ENCODE measurements at regions of chr10 and their contacts with region 1.

Region 1: GRCh38 chr10:11017570-11018431 is at the start of gene CELF2:
- DNase-seq: peak in 1 of 2 donors; percentile 79
- H3K4me3 ChIP-seq: peak within 1 kb of the TSS; percentile 77 to 78
- H3K27ac ChIP-seq: peak within 1 kb of the TSS; percentile 83 to 87
- H3K4me1 ChIP-seq: peaks cover 0 to 7% of the 10 kb centered on the region in 2 donors
- H3K27me3 ChIP-seq: no peaks in the 10 kb centered on the region
- CTCF ChIP-seq: no peak
- total RNA-seq, gene CELF2: 26.6 TPM

Region 2: GRCh38 chr10:10605551-10606081 is 412.2 kb before region 1 on chr10:
- intact Hi-C with region 1: loop called (anchors 5 kb)
- DNase-seq: peak in 1 of 2 donors; percentile 81
- H3K4me3 ChIP-seq: no peak overlapping the region
- H3K27ac ChIP-seq: peak overlapping the region; percentile 74 to 80
- H3K4me1 ChIP-seq: no peaks in the 10 kb centered on the region
- H3K27me3 ChIP-seq: no peaks in the 10 kb centered on the region
- CTCF ChIP-seq: no peak

Region 3: GRCh38 chr10:10831085-10831484 is 186.7 kb before region 1 on chr10:
- intact Hi-C with region 1: loop called (anchors 2 kb)
- DNase-seq: peak; percentile 53 to 94
- H3K4me3 ChIP-seq: peak overlapping the region in 1 of 2 donors; percentile 32
- H3K27ac ChIP-seq: peak overlapping the region; percentile 84 to 86
- H3K4me1 ChIP-seq: peaks cover 0 to 17% of the 10 kb centered on the region in 2 donors
- H3K27me3 ChIP-seq: no peaks in the 10 kb centered on the region
- CTCF ChIP-seq: no peak

Region 4: DNA sequence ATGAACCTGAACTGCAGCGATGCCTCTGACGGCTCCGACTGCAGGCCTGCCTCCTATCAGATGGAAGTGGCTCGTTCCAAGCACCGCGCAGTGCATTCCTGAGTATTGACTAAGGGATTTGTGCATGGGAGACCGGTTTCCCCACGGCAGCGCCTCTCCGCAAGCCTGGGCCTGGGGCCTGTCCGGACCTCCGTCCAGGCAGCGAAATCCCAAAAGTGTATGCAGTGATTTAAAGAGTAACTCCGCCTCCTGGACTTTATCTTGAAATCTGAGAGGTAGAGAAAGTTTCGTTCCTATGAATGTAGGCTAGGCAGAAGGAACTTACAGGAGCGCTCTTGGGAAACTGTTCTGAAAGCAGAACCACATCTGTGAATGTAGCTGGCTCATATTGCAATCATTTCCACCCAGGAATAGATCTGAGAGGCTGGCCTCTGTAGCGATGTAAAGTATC is 106.3 kb before region 1 on chr10:
- intact Hi-C with region 1: loop called (anchors 5 kb)
- DNase-seq: peak; percentile 19 to 91
- H3K4me3 ChIP-seq: peak overlapping the region; percentile 33 to 59
- H3K27ac ChIP-seq: peak overlapping the region; percentile 75 to 79
- H3K4me1 ChIP-seq: peaks cover 0 to 19% of the 10 kb centered on the region in 2 donors
- H3K27me3 ChIP-seq: no peaks in the 10 kb centered on the region
- CTCF ChIP-seq: no peak

Region 5: GRCh38 chr10:11097686-11098085 is 79.9 kb after region 1 on chr10:
- intact Hi-C with region 1: no loop called
- DNase-seq: no peak
- H3K4me3 ChIP-seq: no peak overlapping the region
- H3K27ac ChIP-seq: no peak overlapping the region
- H3K4me1 ChIP-seq: no peaks in the 10 kb centered on the region
- H3K27me3 ChIP-seq: no peaks in the 10 kb centered on the region
- CTCF ChIP-seq: no peak

Region 6: DNA sequence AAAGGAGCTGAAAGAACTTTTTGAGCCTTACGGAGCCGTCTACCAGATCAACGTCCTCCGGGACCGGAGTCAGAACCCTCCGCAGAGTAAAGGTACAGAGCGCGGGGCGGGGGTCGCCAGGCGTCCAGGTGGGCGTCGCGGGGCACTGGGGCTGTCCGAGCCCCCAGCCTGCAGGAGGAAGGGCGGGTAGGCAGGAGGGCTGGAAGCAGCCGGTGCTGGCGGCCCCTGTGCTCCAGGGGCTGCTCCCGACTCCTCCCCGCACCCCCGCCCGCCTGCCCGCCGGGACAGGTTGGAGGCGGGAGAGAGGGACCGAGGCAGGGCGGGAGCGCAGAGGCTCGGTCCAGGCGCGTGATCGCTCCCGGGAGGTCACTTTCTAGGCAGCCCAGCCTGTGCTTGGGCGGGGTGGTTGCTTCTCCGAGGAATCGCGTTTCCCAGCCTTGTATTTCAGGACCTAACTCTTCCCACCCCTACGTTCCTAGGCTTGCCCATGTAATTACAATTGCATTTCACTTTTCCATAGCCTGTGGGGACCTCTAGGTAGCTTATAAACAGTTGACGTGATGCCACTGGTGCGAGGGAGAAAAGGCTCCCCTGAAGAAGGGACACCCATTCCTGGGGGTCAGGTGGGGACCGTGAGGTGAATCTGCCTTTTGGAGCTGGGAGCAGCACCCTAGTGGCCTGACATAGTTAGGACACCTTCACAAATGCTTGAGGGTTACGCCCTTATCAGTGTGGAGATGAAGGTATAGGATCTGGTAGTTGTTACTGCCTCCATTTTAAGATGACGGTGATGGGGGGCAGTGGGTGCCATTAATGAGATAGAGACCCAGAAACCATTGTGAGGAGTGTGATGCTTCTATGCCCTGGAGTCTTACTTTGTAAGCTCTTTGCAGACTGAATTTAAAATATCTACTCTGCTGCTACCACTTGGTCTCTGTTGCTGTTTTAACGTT is 148.1 kb after region 1 on chr10:
- intact Hi-C with region 1: loop called (anchors 5 kb)
- DNase-seq: peak in 1 of 2 donors; percentile 74
- H3K4me3 ChIP-seq: peak overlapping the region; percentile 53 to 91
- H3K27ac ChIP-seq: peak overlapping the region; percentile 62 to 74
- H3K4me1 ChIP-seq: peaks cover 3 to 5% of the 10 kb centered on the region in 2 donors
- H3K27me3 ChIP-seq: no peaks in the 10 kb centered on the region
- CTCF ChIP-seq: peak in 2 of 3 experiments; percentile 25 to 30